Mucosa of descending colon (tissue), 3 donors: ENCODE measurements at regions of chr3 and their contacts with region 1.

Region 1: DNA sequence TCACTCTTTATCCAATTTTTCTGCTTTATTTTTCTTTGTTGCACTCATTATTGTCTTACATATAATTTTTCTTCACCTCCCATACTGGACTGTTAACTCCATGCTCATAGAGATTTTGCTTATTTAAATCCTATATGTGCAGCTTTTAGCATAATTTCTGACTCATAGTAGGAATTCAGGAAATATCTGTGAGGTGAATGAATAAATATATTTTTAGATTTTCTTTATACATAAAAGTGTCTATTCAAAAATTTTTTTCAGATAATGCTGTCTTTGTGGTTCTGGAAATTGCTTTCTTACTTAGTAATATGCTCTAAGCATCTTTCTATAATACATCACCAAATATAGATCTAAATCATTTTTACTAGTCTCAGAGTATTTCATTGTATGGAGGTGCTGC is 191.8 kb upstream of the SUCLG2 start:
- DNase-seq: no peak
- ATAC-seq: no peak
- H3K4me3 ChIP-seq: no peak overlapping the region
- H3K4me1 ChIP-seq: no peaks in the 10 kb centered on the region
- CTCF ChIP-seq: no peak

Region 2: DNA sequence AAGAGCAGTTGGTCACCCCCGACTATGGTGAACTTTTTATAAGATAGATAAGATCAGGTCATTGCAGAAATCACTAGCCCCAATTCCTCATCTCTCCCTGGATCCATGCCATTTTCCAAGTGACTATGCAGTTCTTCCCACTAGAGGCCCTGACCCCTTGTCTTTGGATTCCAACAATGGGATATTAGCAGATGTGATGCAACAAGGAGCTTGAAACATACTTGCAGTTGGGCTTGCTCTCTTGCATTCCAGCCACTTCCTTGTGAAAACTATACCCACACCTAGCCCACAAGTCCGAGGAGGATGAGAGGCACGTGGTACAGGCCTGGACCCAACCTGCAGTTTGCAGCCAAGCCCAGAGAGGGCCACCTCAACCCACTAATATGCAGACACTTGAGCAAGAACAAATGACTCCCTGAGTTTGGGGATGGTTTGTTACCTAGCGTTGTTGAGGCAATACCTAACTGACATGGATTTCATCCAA is 252.4 kb before region 1 on chr3:
- intact Hi-C with region 1: no loop called
- DNase-seq: peak in 1 of 3 donors; percentile 5
- ATAC-seq: peak; percentile 33
- H3K4me3 ChIP-seq: no peak overlapping the region
- H3K4me1 ChIP-seq: no peaks in the 10 kb centered on the region
- CTCF ChIP-seq: no peak

Region 3: DNA sequence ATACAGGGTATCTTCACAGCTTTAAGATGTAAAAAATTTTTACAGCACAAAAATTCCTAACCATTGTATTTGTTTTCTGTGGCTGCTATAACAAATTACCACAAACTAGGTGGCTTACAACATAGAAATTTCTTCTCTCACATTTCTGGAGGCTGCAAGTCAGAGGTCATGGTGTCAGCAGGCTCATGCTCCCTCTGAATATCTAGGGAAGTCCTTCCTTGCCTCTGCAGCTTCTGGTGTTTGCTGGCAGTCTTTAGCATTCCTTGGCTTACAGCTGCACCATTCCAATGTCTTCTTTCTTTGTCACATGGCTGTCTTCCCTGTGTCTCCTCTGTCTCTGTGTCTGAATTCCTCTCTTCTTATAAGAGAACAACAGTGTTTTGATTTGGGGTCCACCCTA is 118.4 kb after region 1 on chr3:
- intact Hi-C with region 1: loop called in 1 of 2 experiments (anchors 10 kb)
- DNase-seq: no peak
- ATAC-seq: no peak
- H3K4me3 ChIP-seq: no peak overlapping the region
- H3K4me1 ChIP-seq: no peaks in the 10 kb centered on the region
- CTCF ChIP-seq: no peak